Esophagus muscularis mucosa (tissue), 4 donors: ENCODE measurements at regions of chr20 and their contacts with region 1.

Region 1: GRCh38 chr20:44521484-44522481 is at the start of gene SERINC3:
- DNase-seq: peak; percentile 99
- H3K4me3 ChIP-seq: peak within 1 kb of the TSS; percentile 83 to 94 (median 86)
- H3K27ac ChIP-seq: peak within 1 kb of the TSS; percentile 98 to 99 (median 98)
- H3K4me1 ChIP-seq: peaks cover 43 to 51% (median 49%) of the 10 kb centered on the region in 4 donors
- H3K27me3 ChIP-seq: no peaks in the 10 kb centered on the region
- CTCF ChIP-seq: peak in 1 of 3 experiments; percentile 11
- EP300 ChIP-seq: peak; percentile 86
- POLR2A ChIP-seq: peak; percentile 88
- total RNA-seq, gene SERINC3: 121 to 175 (median 138) TPM

Region 2: DNA sequence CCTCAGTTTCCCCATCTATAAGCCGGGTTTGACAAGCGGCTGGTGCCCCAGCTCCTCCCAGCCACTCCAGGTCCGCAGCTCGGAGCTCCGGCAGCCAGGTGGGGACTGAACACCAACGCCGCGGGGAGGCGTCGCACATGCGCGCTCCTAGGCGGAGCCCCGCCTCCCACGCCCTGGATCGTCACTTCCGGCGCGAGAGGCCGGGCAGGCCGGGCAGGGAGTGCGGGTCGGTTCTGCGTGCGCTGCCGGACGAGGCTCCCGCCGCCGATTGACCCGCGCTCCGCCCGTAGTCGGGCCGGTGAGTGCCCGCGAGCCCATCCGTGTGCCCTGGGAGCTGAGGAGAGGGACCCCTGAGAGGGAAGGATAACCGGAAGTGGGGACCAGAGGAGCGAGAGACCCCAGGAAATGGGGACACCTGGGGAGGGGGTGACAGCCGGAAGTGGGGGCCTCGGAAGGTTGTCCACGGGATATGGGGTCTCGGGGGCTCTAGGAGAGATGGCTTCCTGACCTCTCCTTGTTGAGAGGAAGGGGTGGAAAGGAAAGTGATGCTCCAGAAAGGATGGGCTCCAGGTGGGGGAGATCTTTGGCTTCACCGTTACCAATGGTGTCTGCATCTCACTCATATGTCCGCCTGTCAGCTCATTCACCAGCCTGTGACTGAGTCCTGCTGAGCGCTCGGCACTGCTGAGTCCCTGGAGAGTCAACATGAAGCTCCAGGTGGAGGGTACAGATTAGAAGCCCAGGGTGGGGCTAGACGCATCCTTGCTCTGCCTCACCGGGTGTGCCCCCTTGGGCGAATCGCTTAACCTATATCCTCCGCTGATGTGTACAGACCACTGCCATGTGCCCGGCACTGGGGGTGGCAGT is 45.9 kb before region 1 on chr20 and contains the start of gene TTPAL:
- intact Hi-C with region 1: loop called (anchors 5 kb)
- DNase-seq: peak; percentile 94
- H3K4me3 ChIP-seq: peak within 1 kb of the TSS; percentile 75 to 87 (median 78)
- H3K27ac ChIP-seq: peak within 1 kb of the TSS; percentile 92 to 96 (median 94)
- H3K4me1 ChIP-seq: peaks cover 9 to 23% (median 20%) of the 10 kb centered on the region in 4 donors
- H3K27me3 ChIP-seq: no peaks in the 10 kb centered on the region
- CTCF ChIP-seq: peak; percentile 45 to 70 (median 57)
- EP300 ChIP-seq: no peak
- POLR2A ChIP-seq: peak; percentile 98
- total RNA-seq, gene TTPAL: 9.6 to 18.2 (median 13.0) TPM

Region 3: DNA sequence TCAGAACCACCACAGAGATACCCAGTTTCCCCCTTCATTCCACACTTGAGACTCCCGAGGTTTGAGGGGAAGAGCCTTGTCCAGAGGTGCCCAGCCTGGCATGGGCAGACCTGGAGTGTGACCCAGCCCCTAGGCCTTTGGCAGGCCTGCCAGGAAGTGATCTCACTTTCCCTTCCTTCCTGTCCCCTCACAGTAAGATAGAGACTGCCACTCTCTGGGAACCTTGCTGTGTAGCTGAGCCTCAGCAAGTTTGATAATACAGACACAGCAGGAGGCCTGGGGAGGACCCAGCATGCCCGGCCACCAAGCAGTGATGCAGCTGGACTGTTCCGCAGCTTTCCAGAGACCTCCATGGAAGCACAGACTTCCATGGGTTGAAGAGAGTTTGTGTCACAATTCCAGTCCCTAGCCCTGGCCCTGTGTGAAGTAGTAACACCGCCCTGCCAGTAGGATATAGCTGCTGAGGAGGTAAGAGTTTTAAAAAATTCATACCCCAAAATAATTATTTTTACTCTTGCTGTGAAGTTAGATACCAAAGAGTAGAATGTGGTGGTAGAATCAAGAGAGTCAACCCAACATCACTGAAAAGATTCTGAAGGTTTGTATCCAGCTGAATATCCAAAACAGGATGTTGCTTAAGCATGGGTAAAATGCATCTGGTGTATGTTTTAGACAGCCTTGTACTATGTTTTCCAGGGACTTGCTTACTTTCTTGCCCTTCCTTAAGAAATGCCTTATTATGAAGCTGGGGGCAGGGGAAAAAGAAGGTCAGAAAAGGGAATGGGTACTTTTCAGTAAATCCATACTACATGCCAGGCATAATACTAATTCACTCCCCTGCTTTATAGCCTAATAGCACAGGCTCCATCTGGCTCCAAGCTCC is 76.9 kb after region 1 on chr20:
- intact Hi-C with region 1: no loop called
- DNase-seq: no peak
- H3K4me3 ChIP-seq: no peak overlapping the region
- H3K27ac ChIP-seq: peak overlapping the region; percentile 88 to 93 (median 90)
- H3K4me1 ChIP-seq: peaks cover 99 to 100% (median 100%) of the 10 kb centered on the region in 4 donors
- H3K27me3 ChIP-seq: no peaks in the 10 kb centered on the region
- CTCF ChIP-seq: peak in 1 of 3 experiments; percentile 32
- EP300 ChIP-seq: no peak
- POLR2A ChIP-seq: no peak